Activated B cell treated with CpG ODN at 0.5 μM for 24 hours (primary cell): ENCODE measurements at regions of chr14 and their contacts with region 1.

Region 1: GRCh38 chr14:89899917-89900663 is 54.4 kb downstream of the EFCAB11 start:
- DNase-seq: no peak
- ATAC-seq: peak; percentile 31
- H3K4me3 Mint-ChIP-seq: no peak overlapping the region
- H3K27ac Mint-ChIP-seq: no peak overlapping the region
- H3K4me1 Mint-ChIP-seq: peaks cover 3% of the 10 kb centered on the region
- H3K27me3 Mint-ChIP-seq: no peaks in the 10 kb centered on the region
- CTCF ChIP-seq: no peak

Region 2: DNA sequence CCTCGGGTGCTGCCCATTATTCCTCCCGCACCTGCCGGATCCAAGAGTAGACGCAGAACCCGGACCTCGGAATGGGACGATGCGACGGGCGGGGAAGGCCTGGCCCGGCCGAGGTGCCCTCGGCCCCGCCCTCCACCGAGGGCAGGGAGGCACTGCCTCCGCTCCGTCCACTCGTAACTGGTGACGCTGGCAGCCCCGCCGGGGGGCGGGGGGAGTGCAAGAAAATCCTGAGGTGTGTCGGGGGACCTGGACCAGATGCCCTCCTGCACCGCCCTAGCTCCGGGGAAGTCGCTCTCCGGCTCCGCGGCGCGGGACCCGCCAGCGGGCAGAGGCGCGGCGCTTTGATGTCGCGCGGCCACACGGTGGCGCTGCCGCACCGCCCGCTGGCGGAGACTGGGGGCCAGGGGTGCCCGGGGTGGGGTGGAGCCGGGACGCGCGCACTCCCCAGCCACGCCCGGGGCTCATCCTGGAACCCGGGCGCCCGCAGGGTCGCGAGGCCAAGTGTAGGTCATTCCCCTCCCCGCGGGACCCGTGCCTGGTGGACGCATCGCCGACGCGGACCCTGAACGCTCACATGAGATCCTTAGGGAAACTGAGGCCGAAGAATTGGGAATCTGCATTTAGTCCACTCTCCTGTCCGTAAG is 872.9 kb before region 1 on chr14:
- CTCF ChIA-PET with region 1: interaction called, 22 read pairs
- POLR2A ChIA-PET with region 1: no interaction called
- intact Hi-C with region 1: loop called (anchors 1 kb)
- DNase-seq: peak; percentile 67
- ATAC-seq: peak; percentile 92
- H3K4me3 Mint-ChIP-seq: peak overlapping the region; percentile 65
- H3K27ac Mint-ChIP-seq: no peak overlapping the region
- H3K4me1 Mint-ChIP-seq: peaks cover 3% of the 10 kb centered on the region
- H3K27me3 Mint-ChIP-seq: peaks cover 41% of the 10 kb centered on the region
- CTCF ChIP-seq: peak; percentile 54

Region 3: GRCh38 chr14:89317051-89317691 is 582.9 kb before region 1 on chr14:
- CTCF ChIA-PET with region 1: no interaction called
- POLR2A ChIA-PET with region 1: no interaction called
- intact Hi-C with region 1: no loop called
- DNase-seq: no peak
- ATAC-seq: peak; percentile 50
- H3K4me3 Mint-ChIP-seq: no peak overlapping the region
- H3K27ac Mint-ChIP-seq: no peak overlapping the region
- H3K4me1 Mint-ChIP-seq: peaks cover 58% of the 10 kb centered on the region
- H3K27me3 Mint-ChIP-seq: no peaks in the 10 kb centered on the region
- CTCF ChIP-seq: no peak

Region 4: GRCh38 chr14:89773644-89774316 is 126.3 kb before region 1 on chr14:
- CTCF ChIA-PET with region 1: no interaction called
- POLR2A ChIA-PET with region 1: no interaction called
- intact Hi-C with region 1: loop called (anchors 5 kb)
- DNase-seq: peak; percentile 35
- ATAC-seq: peak; percentile 93
- H3K4me3 Mint-ChIP-seq: peak overlapping the region; percentile 45
- H3K27ac Mint-ChIP-seq: no peak overlapping the region
- H3K4me1 Mint-ChIP-seq: peaks cover 26% of the 10 kb centered on the region
- H3K27me3 Mint-ChIP-seq: peaks cover 1% of the 10 kb centered on the region
- CTCF ChIP-seq: no peak